MCF 10A (cell line): ENCODE measurements at regions of chr20 and their contacts with region 1.

Region 1: GRCh38 chr20:20237093-20237959 is 130.6 kb upstream of the INSM1 start:
- DNase-seq: peak; percentile 65
- H3K4me3 Mint-ChIP-seq: no peak overlapping the region
- H3K27ac Mint-ChIP-seq: peak overlapping the region; percentile 4
- H3K4me1 Mint-ChIP-seq: peaks cover 7% of the 10 kb centered on the region
- H3K27me3 Mint-ChIP-seq: no peaks in the 10 kb centered on the region
- CTCF ChIP-seq: peak; percentile 59

Region 2: DNA sequence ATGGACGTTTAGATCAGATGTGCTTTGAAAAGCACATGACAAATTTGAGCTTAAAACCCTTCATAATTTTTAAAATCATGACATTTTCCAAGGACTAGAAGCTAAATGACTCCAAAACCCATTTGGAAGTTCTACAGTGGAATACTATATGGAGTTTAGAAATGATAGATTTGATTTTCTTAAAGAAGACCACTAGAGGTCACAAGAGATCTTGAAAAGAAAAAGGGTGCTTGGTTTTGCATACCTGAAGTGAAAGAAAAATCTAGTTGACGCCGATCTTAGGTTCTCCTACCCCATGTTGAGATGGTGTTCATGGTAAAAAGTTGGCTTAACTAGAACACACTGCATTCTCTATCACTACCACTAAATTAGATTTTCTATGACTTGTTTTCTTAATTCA is 153.5 kb before region 1 on chr20:
- CTCF ChIA-PET with region 1: interaction called, 116 read pairs
- POLR2A ChIA-PET with region 1: interaction called, 18 read pairs
- intact Hi-C with region 1: loop called (anchors 1 kb)
- DNase-seq: peak; percentile 56
- H3K4me3 Mint-ChIP-seq: peak overlapping the region; percentile 20
- H3K27ac Mint-ChIP-seq: peak overlapping the region; percentile 95
- H3K4me1 Mint-ChIP-seq: peaks cover 44% of the 10 kb centered on the region
- H3K27me3 Mint-ChIP-seq: no peaks in the 10 kb centered on the region
- CTCF ChIP-seq: peak; percentile 55

Region 3: GRCh38 chr20:20096421-20096820 is 140.9 kb before region 1 on chr20:
- CTCF ChIA-PET with region 1: interaction called, 12 read pairs
- POLR2A ChIA-PET with region 1: no interaction called
- intact Hi-C with region 1: no loop called
- DNase-seq: no peak
- H3K4me3 Mint-ChIP-seq: no peak overlapping the region
- H3K27ac Mint-ChIP-seq: no peak overlapping the region
- H3K4me1 Mint-ChIP-seq: peaks cover 9% of the 10 kb centered on the region
- H3K27me3 Mint-ChIP-seq: no peaks in the 10 kb centered on the region
- CTCF ChIP-seq: no peak

Region 4: GRCh38 chr20:20215976-20216727 is 21.2 kb before region 1 on chr20:
- CTCF ChIA-PET with region 1: interaction called, 10 read pairs
- POLR2A ChIA-PET with region 1: no interaction called
- intact Hi-C with region 1: no loop called
- DNase-seq: no peak
- H3K4me3 Mint-ChIP-seq: no peak overlapping the region
- H3K27ac Mint-ChIP-seq: no peak overlapping the region
- H3K4me1 Mint-ChIP-seq: peaks cover 13% of the 10 kb centered on the region
- H3K27me3 Mint-ChIP-seq: no peaks in the 10 kb centered on the region
- CTCF ChIP-seq: no peak

Region 5: GRCh38 chr20:20261159-20261558 is 23.8 kb after region 1 on chr20:
- CTCF ChIA-PET with region 1: interaction called, 24 read pairs
- POLR2A ChIA-PET with region 1: no interaction called
- intact Hi-C with region 1: loop called (anchors 2 kb)
- DNase-seq: no peak
- H3K4me3 Mint-ChIP-seq: no peak overlapping the region
- H3K27ac Mint-ChIP-seq: no peak overlapping the region
- H3K4me1 Mint-ChIP-seq: no peaks in the 10 kb centered on the region
- H3K27me3 Mint-ChIP-seq: no peaks in the 10 kb centered on the region
- CTCF ChIP-seq: no peak